CD14-positive monocyte (primary cell): ENCODE measurements at regions of chr14 and their contacts with region 1.

Region 1: DNA sequence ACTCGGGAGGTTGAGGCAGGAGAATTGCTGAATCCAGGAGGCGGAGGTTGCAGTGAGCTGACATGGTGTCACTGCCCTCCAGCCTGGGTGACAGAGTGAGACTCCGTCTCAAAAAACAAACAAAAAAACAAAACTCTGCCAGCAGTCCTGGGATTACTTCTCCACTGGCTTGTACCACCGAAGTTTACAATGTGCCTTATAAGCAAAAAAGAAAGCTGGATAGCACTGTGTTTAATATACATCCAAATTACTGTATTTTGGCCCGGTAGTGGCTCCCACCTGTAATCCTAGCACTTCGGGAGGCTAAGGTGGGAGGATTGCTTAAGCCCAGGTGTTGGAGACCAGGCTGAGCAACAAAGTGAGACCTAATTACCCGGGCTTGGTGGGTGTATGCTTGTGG is 16.7 kb downstream of the HOMEZ start:
- DNase-seq: no peak
- H3K4me3 ChIP-seq: no peak overlapping the region
- H3K4me3 Mint-ChIP-seq: no peak overlapping the region
- H3K27ac ChIP-seq: no peak overlapping the region
- H3K27ac Mint-ChIP-seq: no peak overlapping the region
- H3K4me1 ChIP-seq: no peaks in the 10 kb centered on the region
- H3K4me1 Mint-ChIP-seq: no peaks in the 10 kb centered on the region
- H3K27me3 ChIP-seq: peaks cover 0 to 2% of the 10 kb centered on the region in 2 donors
- H3K27me3 Mint-ChIP-seq: peaks cover 0 to 8% (median 6%) of the 10 kb centered on the region in 3 donors
- CTCF ChIP-seq: no peak

Region 2: GRCh38 chr14:23335623-23336022 is 66.4 kb after region 1 on chr14:
- intact Hi-C with region 1: loop called in 1 of 2 experiments (anchors 10 kb)
- DNase-seq: no peak
- H3K4me3 ChIP-seq: no peak overlapping the region
- H3K4me3 Mint-ChIP-seq: no peak overlapping the region
- H3K27ac ChIP-seq: no peak overlapping the region
- H3K27ac Mint-ChIP-seq: no peak overlapping the region
- H3K4me1 ChIP-seq: no peaks in the 10 kb centered on the region
- H3K4me1 Mint-ChIP-seq: no peaks in the 10 kb centered on the region
- H3K27me3 ChIP-seq: no peaks in the 10 kb centered on the region
- H3K27me3 Mint-ChIP-seq: peaks cover 4 to 11% (median 10%) of the 10 kb centered on the region in 3 donors
- CTCF ChIP-seq: no peak